PC-9 (cell line): ENCODE measurements at regions of chr14 and their contacts with region 1.

Region 1: GRCh38 chr14:102530828-102531478 is 21.4 kb upstream of the ANKRD9 start:
- DNase-seq: peak; percentile 28 to 55
- H3K4me3 ChIP-seq: no peak overlapping the region
- H3K27ac ChIP-seq: 0 out of 2 replicates have a peak overlapping the region, but pooled peaks have one; percentile 8
- H3K4me1 ChIP-seq: peaks cover 55% of the 10 kb centered on the region
- H3K27me3 ChIP-seq: no peaks in the 10 kb centered on the region
- CTCF ChIP-seq: no peak

Region 2: GRCh38 chr14:102555264-102555831 is 24.4 kb after region 1 on chr14:
- CTCF ChIA-PET with region 1: interaction called, 3 read pairs
- POLR2A ChIA-PET with region 1: interaction called, 17 read pairs
- intact Hi-C with region 1: no loop called
- DNase-seq: no peak
- H3K4me3 ChIP-seq: no peak overlapping the region
- H3K27ac ChIP-seq: no peak overlapping the region
- H3K4me1 ChIP-seq: peaks cover 31% of the 10 kb centered on the region
- H3K27me3 ChIP-seq: no peaks in the 10 kb centered on the region
- CTCF ChIP-seq: no peak